ENCODE measurements at regions of chr6 and their contacts with region 1.

Region 1: DNA sequence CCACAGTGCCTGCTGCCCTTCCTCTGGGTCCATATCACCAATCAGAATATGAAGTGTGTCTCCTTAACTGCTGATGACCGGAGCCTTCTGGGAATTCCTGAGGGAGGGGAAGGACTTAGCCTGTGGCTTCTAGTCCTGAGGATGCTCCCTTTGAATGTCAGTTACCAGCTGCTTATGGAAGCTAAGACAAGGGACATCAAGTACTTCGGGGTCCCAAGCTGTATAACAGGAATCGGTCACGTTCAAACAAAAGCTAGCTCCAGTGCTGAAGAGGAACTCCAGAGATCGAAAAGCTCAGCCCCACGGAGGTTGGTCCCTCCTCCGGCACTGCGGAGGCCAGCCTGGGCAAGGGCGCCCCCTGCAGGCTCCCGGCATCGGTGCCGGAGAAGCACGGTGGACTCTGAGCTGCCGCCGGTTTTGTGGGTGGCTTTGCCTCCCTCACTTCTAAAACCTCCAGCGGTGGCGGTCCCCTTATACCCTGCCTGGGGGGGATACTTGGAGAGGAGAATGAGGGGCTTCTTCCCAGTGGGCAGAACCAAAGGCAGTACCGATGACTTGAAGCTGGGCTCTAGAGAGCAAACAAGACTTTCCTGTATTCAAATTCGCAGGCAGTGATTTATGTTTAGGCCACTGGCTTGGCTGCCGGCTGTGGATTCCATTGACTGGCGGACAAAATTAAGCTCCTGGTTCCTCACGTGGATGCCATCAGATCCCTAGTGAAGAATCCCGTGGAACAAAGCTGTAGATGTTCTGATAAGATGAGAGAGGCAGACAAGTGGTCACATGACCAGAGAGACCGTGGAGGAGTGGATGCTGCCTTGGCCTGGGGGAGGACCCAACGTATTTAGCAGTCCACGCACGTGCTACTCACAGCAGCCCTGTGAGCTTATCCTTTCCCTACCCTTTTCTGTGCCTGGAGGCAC is 16.2 kb upstream of the UBR2 start:
- DNase-seq: peak; percentile 84
- ATAC-seq: peak; percentile 99
- H3K4me3 ChIP-seq: peak overlapping the region; percentile 67
- H3K27ac ChIP-seq: no peak overlapping the region
- H3K4me1 ChIP-seq: peaks cover 10% of the 10 kb centered on the region
- H3K27me3 ChIP-seq: no peaks in the 10 kb centered on the region
- CTCF ChIP-seq: peak; percentile 98

Region 2: GRCh38 chr6:42239351-42240055 is 308.2 kb before region 1 on chr6:
- CTCF ChIA-PET with region 1: interaction called, 10 read pairs
- POLR2A ChIA-PET with region 1: interaction called, 4 read pairs
- intact Hi-C with region 1: no loop called
- DNase-seq: peak; percentile 92
- ATAC-seq: peak; percentile 95
- H3K4me3 ChIP-seq: no peak overlapping the region
- H3K27ac ChIP-seq: peak overlapping the region; percentile 88
- H3K4me1 ChIP-seq: peaks cover 29% of the 10 kb centered on the region
- H3K27me3 ChIP-seq: no peaks in the 10 kb centered on the region
- CTCF ChIP-seq: no peak

Region 3: GRCh38 chr6:42511803-42512422 is 35.8 kb before region 1 on chr6:
- CTCF ChIA-PET with region 1: interaction called, 3 read pairs
- POLR2A ChIA-PET with region 1: interaction called, 4 read pairs
- intact Hi-C with region 1: loop called (anchors 2 kb)
- DNase-seq: peak; percentile 60
- ATAC-seq: no peak
- H3K4me3 ChIP-seq: no peak overlapping the region
- H3K27ac ChIP-seq: peak overlapping the region; percentile 15; the same call in 1 of the 2 replicates
- H3K4me1 ChIP-seq: peaks cover 4% of the 10 kb centered on the region; the same call in 1 of the 2 replicates
- H3K27me3 ChIP-seq: no peaks in the 10 kb centered on the region
- CTCF ChIP-seq: no peak